ENCODE measurements at regions of chr3 and their contacts with region 1.

Region 1: GRCh38 chr3:133927540-133928066 is 31.9 kb upstream of the RAB6B start:
- DNase-seq: no peak
- ATAC-seq: peak; percentile 74
- H3K4me3 ChIP-seq: peak overlapping the region; percentile 32 to 48
- H3K27ac ChIP-seq: no peak overlapping the region
- H3K4me1 ChIP-seq: no peaks in the 10 kb centered on the region
- H3K27me3 ChIP-seq: no peaks in the 10 kb centered on the region
- CTCF ChIP-seq: peak; percentile 99

Region 2: GRCh38 chr3:132730891-132731580 is 1196.6 kb before region 1 on chr3:
- CTCF ChIA-PET with region 1: no interaction called
- POLR2A ChIA-PET with region 1: no interaction called
- in situ Hi-C with region 1: no loop called
- intact Hi-C with region 1: loop called (anchors 10 kb)
- DNase-seq: no peak
- ATAC-seq: peak; percentile 93
- H3K4me3 ChIP-seq: no peak overlapping the region
- H3K27ac ChIP-seq: no peak overlapping the region
- H3K4me1 ChIP-seq: peaks cover 5% of the 10 kb centered on the region; the same call in 1 of the 2 replicates
- H3K27me3 ChIP-seq: peaks cover 9% of the 10 kb centered on the region; the same call in 1 of the 2 replicates
- CTCF ChIP-seq: peak; percentile 74

Region 3: DNA sequence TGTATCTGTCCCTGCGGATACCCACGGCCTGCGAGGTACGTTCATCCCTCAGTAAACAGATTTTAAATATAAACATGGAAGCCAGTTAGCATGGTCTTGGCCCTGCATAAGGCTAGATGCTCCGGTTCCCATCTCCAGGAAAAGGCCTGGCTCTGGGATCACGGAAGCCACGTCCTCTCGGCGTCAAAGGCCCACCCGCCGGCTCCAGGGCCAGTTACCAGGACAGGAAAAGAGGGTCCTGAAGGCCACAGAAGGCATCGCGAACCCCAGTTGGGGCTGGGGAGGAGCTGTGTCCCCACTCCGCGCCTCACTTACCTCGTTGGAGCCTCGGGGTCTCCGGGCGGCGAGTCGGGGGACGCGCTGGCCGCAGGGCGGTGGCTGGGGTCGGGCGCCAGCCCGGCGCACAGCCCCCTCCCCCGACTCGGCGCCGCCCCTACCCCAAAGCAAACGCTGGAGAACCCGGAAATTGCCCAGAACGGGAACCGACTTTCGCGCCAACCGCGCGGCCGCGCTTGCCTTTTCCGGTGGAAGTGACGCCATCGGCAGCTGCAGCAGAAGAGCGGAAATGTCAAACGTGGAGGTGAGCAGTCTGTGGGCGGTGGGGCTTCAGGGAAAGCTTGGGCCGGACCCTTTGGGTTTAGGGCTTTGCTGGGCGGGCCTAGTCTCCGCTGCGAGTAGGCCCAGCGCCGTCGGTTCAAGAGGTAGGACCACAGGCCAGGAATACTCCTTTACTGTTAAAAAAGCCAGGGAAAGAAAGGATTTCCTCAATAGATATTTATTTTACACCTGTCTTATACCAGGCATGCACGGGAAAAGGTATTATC is 265.9 kb before region 1 on chr3 and contains the start of gene TOPBP1:
- CTCF ChIA-PET with region 1: no interaction called
- POLR2A ChIA-PET with region 1: no interaction called
- in situ Hi-C with region 1: no loop called
- intact Hi-C with region 1: loop called (anchors 10 kb)
- DNase-seq: no peak
- ATAC-seq: peak; percentile 95
- H3K4me3 ChIP-seq: peak within 1 kb of the TSS; percentile 84 to 97
- H3K27ac ChIP-seq: peak within 1 kb of the TSS; percentile 95
- H3K4me1 ChIP-seq: peaks cover 33% of the 10 kb centered on the region
- H3K27me3 ChIP-seq: no peaks in the 10 kb centered on the region
- CTCF ChIP-seq: no peak
- total RNA-seq, gene TOPBP1: 78.4 TPM

Region 4: GRCh38 chr3:133821767-133822638 is 105.6 kb before region 1 on chr3:
- CTCF ChIA-PET with region 1: no interaction called
- POLR2A ChIA-PET with region 1: no interaction called
- in situ Hi-C with region 1: no loop called
- intact Hi-C with region 1: loop called (anchors 2 kb)
- DNase-seq: peak; percentile 91
- ATAC-seq: peak; percentile 73
- H3K4me3 ChIP-seq: no peak overlapping the region
- H3K27ac ChIP-seq: no peak overlapping the region
- H3K4me1 ChIP-seq: 0 out of 2 replicates have a peak, but pooled peaks cover 3% of the 10 kb centered on the region
- H3K27me3 ChIP-seq: no peaks in the 10 kb centered on the region
- CTCF ChIP-seq: no peak; the same call in 1 of the 2 replicates

Region 5: DNA sequence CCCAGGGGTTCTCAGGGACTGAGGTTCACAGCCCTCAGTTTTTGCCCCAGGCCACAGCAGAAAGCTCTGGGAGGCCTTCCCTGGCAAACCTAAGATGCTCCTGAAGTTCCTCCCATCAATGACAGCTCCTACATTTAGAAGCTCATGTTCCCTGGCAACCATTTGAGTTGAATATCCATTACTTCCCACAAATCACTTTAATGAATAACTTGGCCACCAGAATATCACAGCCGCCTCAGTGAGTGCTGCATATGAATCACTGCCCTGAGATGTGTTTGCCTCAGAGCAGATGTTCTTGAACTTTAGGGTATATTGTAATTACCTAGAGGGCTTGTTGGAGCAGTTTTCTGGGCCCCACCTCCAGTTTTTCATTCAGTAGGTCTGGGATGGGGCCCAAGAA is 74.7 kb after region 1 on chr3:
- CTCF ChIA-PET with region 1: no interaction called
- POLR2A ChIA-PET with region 1: no interaction called
- in situ Hi-C with region 1: no loop called
- intact Hi-C with region 1: no loop called
- DNase-seq: no peak
- ATAC-seq: no peak
- H3K4me3 ChIP-seq: no peak overlapping the region
- H3K27ac ChIP-seq: no peak overlapping the region
- H3K4me1 ChIP-seq: no peaks in the 10 kb centered on the region
- H3K27me3 ChIP-seq: no peaks in the 10 kb centered on the region; the same call in 1 of the 2 replicates
- CTCF ChIP-seq: no peak

Region 6: DNA sequence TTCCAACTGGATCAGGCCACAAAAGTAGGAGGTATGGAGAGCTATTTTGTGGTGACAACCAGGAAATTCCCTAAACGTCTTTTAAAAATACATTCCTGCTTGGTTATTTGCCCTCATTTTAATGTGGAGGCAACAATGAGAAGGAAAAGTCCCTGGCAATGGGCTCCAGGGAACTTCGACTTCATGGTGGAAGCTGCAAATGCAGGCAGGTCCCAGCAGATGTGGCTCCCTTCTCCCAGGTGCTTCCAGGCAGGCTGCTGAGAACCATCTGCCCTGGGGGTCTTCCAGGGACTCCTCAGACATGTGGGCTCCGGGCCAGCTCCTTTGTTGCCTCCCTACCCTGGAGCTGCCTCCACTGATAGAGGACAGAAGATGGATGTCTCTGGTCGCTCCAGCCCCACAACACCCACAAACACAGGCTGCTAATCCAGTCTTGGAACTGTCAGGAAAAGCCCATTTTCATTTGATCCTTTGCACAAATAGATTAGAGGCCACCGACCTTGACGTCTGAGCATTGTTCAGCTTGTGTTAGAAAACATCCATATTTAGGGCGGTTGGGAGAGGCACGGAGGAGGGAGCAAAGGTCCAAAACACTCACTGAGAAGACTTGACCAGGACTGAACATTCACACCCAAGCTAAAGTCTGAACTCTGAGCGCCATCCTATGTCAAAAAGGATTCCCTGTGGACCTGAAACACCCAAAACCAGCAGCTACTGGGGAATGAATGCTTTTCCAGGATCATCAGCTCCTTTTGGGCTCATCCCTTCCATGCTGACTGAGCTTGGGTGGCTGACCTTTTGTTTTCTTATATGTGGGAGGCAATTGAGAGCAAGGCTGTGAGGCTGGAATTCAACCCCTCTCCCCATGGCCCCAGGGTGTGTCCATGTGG is 132.3 kb after region 1 on chr3:
- CTCF ChIA-PET with region 1: no interaction called
- POLR2A ChIA-PET with region 1: no interaction called
- in situ Hi-C with region 1: no loop called
- intact Hi-C with region 1: loop called (anchors 5 kb)
- DNase-seq: no peak
- ATAC-seq: no peak
- H3K4me3 ChIP-seq: no peak overlapping the region
- H3K27ac ChIP-seq: no peak overlapping the region
- H3K4me1 ChIP-seq: peaks cover 11% of the 10 kb centered on the region; the same call in 1 of the 2 replicates
- H3K27me3 ChIP-seq: peaks cover 2% of the 10 kb centered on the region; the same call in 1 of the 2 replicates
- CTCF ChIP-seq: no peak

Region 7: GRCh38 chr3:134212906-134213665 is 285.5 kb after region 1 on chr3:
- CTCF ChIA-PET with region 1: no interaction called
- POLR2A ChIA-PET with region 1: no interaction called
- in situ Hi-C with region 1: no loop called
- intact Hi-C with region 1: loop called (anchors 5 kb)
- DNase-seq: peak; percentile 60
- ATAC-seq: peak; percentile 97
- H3K4me3 ChIP-seq: no peak overlapping the region
- H3K27ac ChIP-seq: no peak overlapping the region
- H3K4me1 ChIP-seq: peaks cover 6% of the 10 kb centered on the region
- H3K27me3 ChIP-seq: no peaks in the 10 kb centered on the region
- CTCF ChIP-seq: peak; percentile 100

Measured in Panc1 (cell line).